Heart left ventricle (tissue), 16 donors: ENCODE measurements at regions of chr2 and their contacts with region 1.

Region 1: DNA sequence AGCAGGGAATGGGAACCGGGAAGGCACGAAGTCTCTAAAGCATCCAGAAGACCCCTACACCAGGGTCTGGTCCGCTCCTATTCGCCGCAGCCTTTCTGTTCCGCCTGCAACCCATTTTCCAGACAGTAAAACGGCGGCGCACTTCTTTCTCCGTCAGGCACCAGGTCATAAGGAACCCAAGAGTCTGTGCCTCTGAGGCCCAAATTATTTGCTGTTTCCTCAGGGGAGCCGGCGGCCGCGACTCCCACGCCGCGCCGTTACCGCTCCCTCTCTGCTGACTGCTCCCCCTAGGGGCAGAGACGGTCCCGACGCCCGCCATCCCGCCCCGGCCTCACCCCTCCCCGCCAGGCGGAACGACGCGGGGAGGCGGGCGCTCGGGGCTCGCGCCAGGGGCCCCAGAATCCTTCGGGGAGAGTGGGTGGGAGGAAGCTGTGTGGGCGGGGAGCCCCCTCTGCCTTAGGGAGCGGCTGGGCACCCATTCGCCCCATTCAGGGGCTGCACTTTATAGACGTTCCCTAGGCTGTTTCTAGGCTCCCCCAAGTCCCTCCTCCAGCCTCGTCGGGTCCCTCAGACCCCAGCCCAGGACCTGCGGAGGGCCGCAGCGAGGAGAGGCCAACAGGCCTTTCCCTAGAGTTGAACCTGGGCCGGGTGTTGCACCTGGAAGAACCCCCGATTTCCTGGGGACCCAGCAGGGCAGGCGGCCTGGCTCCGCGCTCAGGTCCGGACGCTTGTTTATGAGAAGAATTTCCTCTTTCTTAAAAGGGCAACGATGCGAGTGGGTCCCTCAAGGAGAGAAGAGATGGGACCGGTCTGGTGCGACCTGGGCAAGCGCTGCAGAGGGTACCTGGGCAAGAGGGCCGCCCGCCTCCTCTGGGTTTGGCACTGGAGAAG is 3.6 kb upstream of the CTDSP1 start:
- DNase-seq: peak; percentile 95 to 98 (median 95)
- ATAC-seq: peak; percentile 70 to 80 (median 74)
- H3K4me3 ChIP-seq: peak overlapping the region; percentile 63 to 100 (median 96)
- H3K27ac ChIP-seq: peak overlapping the region; percentile 99 to 100 (median 100)
- H3K4me1 ChIP-seq: peaks cover 0 to 52% (median 28%) of the 10 kb centered on the region in 12 donors
- H3K27me3 ChIP-seq: no peaks in the 10 kb centered on the region
- CTCF ChIP-seq: peak; percentile 83 to 99 (median 94)
- POLR2A ChIP-seq: peak in 1 of 2 donors; percentile 59

Region 2: DNA sequence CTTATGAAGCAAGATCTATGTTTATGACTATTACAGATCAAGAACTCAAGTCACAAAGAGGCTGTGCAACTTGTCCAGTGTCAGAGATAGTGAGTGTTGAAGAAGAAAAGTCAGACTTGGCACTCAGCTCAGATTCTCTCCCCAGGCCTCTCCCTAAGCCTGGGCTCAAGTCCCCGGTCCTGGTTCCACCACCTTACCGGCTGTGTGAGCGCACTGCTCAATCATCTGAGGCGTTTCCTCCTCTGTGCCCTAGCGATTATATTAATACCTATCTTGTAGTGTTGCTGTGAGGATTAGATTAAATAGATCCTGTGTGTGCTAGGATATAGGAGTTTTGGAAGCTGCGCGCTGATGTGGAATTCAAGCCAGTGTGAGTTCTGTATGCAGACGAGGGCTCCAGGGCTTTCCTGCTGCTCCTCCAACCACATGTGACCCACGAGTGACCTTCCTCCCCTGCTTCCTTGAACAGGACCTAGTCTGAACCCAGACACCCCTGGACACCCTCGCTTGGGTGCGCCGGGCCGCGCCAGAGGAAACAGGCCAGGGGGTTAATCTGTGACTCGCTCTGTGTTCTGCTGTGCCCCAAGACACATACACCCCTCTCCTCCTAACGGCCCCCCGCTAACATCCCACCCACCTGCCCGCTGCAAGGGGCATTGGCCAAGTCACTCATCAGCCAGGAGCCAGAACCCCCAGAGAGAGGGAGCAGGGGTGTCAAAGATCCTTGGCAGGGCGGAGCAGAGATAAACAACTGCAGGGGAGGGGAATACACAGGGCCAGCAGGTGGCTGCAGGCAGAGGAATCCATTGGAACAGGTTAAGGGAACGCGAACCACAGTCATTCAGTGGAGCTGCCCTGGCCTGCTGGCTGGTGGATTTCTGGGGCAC is 431.5 kb before region 1 on chr2:
- intact Hi-C with region 1: no loop called
- DNase-seq: peak in 3 of 5 donors; percentile 37 to 51 (median 48)
- ATAC-seq: peak in 3 of 4 donors; percentile 49 to 55 (median 51)
- H3K4me3 ChIP-seq: peak overlapping the region in 1 of 12 donors; percentile 1
- H3K27ac ChIP-seq: peak overlapping the region; percentile 19 to 97 (median 76)
- H3K4me1 ChIP-seq: peaks cover 7 to 68% (median 48%) of the 10 kb centered on the region in 12 donors
- H3K27me3 ChIP-seq: no peaks in the 10 kb centered on the region
- CTCF ChIP-seq: no peak
- POLR2A ChIP-seq: no peak

Region 3: GRCh38 chr2:218186355-218186766 is 209.7 kb before region 1 on chr2:
- intact Hi-C with region 1: loop called in 2 of 10 experiments (anchors 10 kb)
- DNase-seq: peak in 4 of 5 donors; percentile 46 to 66 (median 58)
- ATAC-seq: peak; percentile 80 to 94 (median 92)
- H3K4me3 ChIP-seq: peak overlapping the region in 1 of 12 donors; percentile 19
- H3K27ac ChIP-seq: peak overlapping the region in 1 of 12 donors; percentile 52
- H3K4me1 ChIP-seq: peaks cover 0 to 11% (median 2%) of the 10 kb centered on the region in 12 donors
- H3K27me3 ChIP-seq: no peaks in the 10 kb centered on the region
- CTCF ChIP-seq: peak; percentile 69 to 85 (median 80)
- POLR2A ChIP-seq: no peak

Region 4: DNA sequence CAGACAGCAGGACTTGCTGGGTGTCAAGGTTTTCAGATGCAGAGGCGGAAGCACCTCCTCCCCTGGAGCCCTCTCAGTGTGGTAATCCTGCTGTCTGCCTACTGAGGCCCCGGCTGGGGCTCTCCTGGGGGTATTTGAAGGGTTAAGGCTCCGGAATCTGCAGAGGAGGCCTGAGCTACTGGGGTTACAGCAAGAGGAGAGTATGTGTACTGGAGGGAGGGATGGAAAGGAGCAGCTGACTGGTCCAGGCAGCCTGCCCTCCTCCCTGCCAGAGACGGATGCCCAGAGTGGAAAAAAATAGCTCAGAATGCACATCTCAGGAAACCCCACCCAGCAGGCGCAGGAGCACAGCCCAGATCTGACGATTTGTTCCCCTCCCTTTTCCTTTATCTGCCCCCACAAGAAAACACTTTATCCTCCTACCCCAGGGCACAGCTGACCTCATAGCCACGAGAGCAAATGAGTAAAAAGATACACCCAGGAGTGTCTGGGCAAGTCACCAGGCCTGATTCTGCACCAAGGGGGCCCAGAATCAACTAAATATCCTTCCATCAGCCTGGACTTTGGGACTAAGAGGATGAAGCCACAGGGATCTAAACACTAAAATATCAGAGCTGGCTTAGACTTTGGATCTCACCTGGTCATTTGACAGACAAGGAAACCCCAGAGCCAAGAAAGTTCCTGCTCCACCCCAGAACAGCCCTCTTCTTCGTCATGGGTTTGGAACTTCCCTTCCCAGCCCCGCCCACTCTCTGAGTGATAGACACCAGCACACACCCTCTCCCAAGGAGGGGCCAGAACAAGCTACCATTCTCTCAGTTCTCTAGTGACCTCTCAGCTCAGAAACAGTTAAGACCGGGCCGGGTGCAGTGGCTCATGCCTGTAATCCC is 109.2 kb before region 1 on chr2:
- intact Hi-C with region 1: loop called in 5 of 10 experiments (anchors 2 to 5 kb)
- DNase-seq: peak; percentile 88 to 96 (median 95)
- ATAC-seq: peak; percentile 83 to 89 (median 85)
- H3K4me3 ChIP-seq: peak overlapping the region; percentile 28 to 70 (median 53)
- H3K27ac ChIP-seq: peak overlapping the region; percentile 89 to 100 (median 96)
- H3K4me1 ChIP-seq: peaks cover 27 to 99% (median 92%) of the 10 kb centered on the region in 12 donors
- H3K27me3 ChIP-seq: no peaks in the 10 kb centered on the region
- CTCF ChIP-seq: no peak
- POLR2A ChIP-seq: peak in 1 of 2 donors; percentile 35

Region 5: DNA sequence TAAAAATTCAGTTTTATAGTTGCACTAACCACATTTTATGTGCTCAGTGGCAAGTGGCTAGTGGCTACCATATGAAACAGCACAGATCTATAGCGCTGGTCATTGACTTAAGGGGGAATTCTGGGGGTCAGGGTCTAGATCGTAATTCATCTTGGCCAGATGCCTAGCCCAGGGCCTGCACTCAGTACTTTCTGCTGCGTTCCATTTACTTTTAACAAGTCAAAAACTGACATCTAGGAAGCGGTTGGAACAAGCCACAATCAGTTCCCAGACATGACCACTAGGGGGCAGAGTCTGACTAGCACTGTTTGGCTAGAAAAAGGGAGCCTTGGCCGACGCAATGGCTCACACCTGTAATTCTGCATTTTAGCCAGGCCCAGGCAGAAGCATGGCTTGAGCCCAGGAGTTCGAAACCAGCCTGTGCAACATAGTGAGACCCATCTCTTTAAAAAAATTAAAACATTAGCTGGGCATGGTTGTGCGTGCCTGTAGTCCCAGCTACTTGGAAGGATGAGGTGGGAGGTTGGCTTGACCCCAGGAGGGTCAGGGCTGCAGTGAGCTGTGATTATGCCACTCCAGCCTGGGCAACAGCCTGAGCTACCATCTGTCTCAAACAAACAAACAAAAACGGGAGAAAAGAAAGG is 94.7 kb before region 1 on chr2:
- intact Hi-C with region 1: loop called in 9 of 10 experiments (anchors 1 to 10 kb)
- DNase-seq: peak; percentile 75 to 87 (median 83)
- ATAC-seq: peak; percentile 78 to 86 (median 82)
- H3K4me3 ChIP-seq: no peak overlapping the region
- H3K27ac ChIP-seq: no peak overlapping the region
- H3K4me1 ChIP-seq: peaks cover 0 to 7% (median 0%) of the 10 kb centered on the region in 12 donors
- H3K27me3 ChIP-seq: no peaks in the 10 kb centered on the region
- CTCF ChIP-seq: peak; percentile 94 to 99 (median 97)
- POLR2A ChIP-seq: no peak

Region 6: DNA sequence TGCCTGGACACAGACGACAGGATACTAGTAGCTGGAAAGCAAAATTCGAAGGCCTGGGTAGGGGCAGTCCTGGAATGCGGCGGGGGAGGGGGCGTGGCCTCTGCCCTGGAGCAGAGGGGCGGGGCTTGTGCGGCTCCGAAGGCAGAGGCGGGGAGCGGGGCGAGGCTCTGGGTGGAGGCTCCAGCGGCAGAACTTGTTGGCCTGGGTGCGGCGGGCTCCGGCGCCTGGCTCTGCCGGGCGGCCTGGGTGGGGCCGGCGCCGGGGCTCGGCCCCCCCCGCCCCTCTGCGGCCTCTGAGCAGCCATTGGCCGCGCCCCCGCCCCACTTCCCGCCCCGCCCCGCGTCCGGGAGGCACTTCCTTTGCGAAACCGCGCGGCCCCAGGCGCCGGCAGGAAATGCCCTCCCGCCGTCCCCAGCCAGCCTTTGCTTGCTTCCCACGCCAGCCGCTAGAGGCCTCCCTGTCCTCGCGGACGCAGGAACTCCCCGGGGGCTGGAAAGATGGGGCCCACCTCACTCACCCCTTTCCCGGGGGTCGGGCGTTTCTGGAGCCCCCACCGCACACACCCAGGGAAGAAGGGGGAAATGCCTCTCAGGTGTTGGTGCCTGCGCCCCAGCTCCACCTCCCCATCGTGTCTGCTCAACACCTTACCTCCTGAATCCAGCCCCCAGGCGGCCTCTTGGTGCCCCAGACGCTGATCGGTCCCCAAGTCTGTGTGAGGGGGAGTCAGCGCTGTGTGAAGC is 10.3 kb after region 1 on chr2:
- intact Hi-C with region 1: loop called in 1 of 10 experiments (anchors 1 kb)
- DNase-seq: peak; percentile 98 to 99 (median 98)
- ATAC-seq: peak; percentile 78 to 91 (median 88)
- H3K4me3 ChIP-seq: peak overlapping the region in 11 of 12 donors; percentile 18 to 66 (median 57)
- H3K27ac ChIP-seq: peak overlapping the region; percentile 82 to 96 (median 92)
- H3K4me1 ChIP-seq: peaks cover 12 to 58% (median 46%) of the 10 kb centered on the region in 12 donors
- H3K27me3 ChIP-seq: no peaks in the 10 kb centered on the region
- CTCF ChIP-seq: peak; percentile 57 to 91 (median 76)
- POLR2A ChIP-seq: peak in 1 of 2 donors; percentile 39